Esophagus muscularis mucosa (tissue), 4 donors: ENCODE measurements at regions of chr17 and their contacts with region 1.

Region 1: DNA sequence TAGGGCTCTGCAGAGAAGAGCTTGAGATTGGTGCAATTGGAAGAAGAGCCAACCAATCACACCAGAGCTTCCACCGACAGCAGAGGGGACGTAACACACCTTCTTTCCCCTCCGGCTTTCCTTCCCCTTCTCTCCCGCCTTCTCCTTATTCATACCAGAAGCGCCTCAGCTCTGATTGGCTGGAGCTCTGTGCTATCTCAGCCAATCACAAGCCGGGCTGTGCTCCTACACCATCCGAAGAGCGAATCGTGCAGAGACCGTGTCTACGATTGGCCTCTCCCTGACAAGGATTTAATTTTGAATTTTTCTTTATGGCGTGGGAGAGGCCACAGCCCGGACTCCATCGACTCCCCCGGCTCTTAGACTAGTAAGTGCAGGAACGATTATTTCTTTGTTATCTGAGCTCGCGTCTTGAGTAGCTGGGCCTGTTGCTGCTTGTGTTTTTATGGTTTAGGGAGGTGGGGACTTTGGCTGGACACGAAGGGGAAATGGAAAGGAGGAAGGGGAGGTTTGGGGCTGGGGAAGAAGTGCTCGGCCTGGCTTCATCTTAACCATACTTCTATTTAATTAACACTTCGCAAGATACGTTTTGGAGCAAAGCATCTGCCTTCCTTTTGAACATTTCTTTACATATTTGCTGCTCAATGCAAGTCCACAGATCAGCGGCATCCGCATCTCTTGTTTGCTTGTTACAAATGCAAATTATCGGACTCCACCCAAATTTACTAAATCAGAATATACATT is at the start of gene PRR11:
- DNase-seq: peak; percentile 99
- H3K4me3 ChIP-seq: peak within 1 kb of the TSS; percentile 66 to 77 (median 74)
- H3K27ac ChIP-seq: peak within 1 kb of the TSS; percentile 80 to 92 (median 86)
- H3K4me1 ChIP-seq: peaks cover 21 to 37% (median 31%) of the 10 kb centered on the region in 4 donors
- H3K27me3 ChIP-seq: no peaks in the 10 kb centered on the region
- CTCF ChIP-seq: no peak
- EP300 ChIP-seq: no peak
- POLR2A ChIP-seq: no peak
- total RNA-seq, gene PRR11: 0.32 to 110 (median 0.87) TPM

Region 2: DNA sequence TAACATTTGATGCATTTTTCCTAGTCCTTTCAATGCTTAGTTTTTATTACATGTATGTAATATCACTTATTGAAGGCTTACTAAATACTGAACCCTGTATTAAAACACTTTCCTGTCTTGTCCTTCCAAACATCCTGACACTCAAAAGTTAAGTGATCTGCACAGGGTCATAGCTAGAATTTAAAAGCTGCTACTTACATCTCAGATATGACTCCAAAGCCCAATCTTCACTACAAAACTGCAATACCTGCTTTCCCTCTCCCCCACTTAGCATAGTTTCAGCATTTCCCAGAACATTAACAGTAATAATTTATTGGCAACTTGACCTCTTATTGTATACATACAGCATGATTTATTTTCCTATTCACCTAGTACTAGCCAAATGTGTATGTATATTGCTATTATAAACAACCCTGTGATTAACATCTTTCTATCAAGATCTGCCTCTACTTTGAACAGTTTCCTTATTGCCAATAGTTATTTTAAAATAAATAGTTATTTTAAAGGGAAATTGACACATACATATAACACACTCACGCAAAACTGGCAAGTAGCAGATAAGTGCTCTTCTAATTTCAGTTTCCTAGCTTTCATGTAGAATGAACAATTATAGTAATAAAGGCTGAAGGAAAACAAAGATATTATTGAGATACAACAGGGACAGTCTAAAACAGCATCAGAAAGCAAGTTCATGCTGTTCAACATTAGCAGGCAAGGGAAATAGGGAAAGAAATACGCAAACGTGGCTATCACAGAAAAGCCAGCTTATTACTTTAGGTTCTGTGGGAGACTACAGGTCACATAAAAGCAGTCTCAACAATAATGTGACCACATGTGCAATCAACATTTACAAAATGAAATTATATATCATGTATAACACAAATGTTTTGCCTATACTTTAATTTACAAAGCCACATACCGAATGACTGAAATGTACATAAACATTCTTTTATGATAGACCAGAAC is 44.4 kb before region 1 on chr17:
- intact Hi-C with region 1: loop called (anchors 5 kb)
- DNase-seq: no peak
- H3K4me3 ChIP-seq: no peak overlapping the region
- H3K27ac ChIP-seq: no peak overlapping the region
- H3K4me1 ChIP-seq: peaks cover 8 to 20% (median 17%) of the 10 kb centered on the region in 4 donors
- H3K27me3 ChIP-seq: no peaks in the 10 kb centered on the region
- CTCF ChIP-seq: no peak
- EP300 ChIP-seq: no peak
- POLR2A ChIP-seq: no peak

Region 3: GRCh38 chr17:59220376-59221158 is 65.0 kb after region 1 on chr17 and contains the start of gene GDPD1:
- intact Hi-C with region 1: loop called (anchors 10 kb)
- DNase-seq: peak; percentile 97
- H3K4me3 ChIP-seq: peak within 1 kb of the TSS; percentile 67 to 92 (median 69)
- H3K27ac ChIP-seq: peak within 1 kb of the TSS; percentile 72 to 80 (median 78)
- H3K4me1 ChIP-seq: peaks cover 4 to 12% (median 8%) of the 10 kb centered on the region in 4 donors
- H3K27me3 ChIP-seq: no peaks in the 10 kb centered on the region
- CTCF ChIP-seq: peak; percentile 73 to 79 (median 78)
- EP300 ChIP-seq: no peak
- POLR2A ChIP-seq: no peak
- total RNA-seq, gene GDPD1: 0.75 to 2.0 (median 1.00) TPM

Region 4: DNA sequence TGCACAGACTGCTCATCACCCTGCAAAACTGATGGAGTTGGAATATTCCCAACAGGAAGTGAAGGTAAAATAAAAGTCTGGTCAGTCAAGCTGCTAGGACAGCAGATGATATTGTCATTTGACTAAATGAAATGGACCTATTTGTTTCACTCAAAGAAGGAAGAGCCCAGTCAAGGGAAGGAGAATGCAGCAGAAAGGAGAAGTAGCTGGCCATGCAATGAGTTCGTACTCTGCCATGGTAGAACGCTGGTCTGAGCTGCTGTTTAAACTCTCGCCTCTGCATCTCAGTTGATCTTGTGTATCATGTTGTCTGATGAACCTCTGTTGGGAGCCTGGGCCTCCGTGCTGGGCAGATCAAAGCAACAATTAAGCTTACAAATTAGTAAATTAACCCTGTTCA is 160.3 kb after region 1 on chr17:
- intact Hi-C with region 1: no loop called
- DNase-seq: no peak
- H3K4me3 ChIP-seq: no peak overlapping the region
- H3K27ac ChIP-seq: no peak overlapping the region
- H3K4me1 ChIP-seq: peaks cover 0 to 6% (median 5%) of the 10 kb centered on the region in 4 donors
- H3K27me3 ChIP-seq: no peaks in the 10 kb centered on the region
- CTCF ChIP-seq: no peak
- EP300 ChIP-seq: no peak
- POLR2A ChIP-seq: no peak